Activated naive CD4-positive, alpha-beta T cell treated with anti-CD3 and anti-CD28 coated beads for 36 hours (primary cell): ENCODE measurements at regions of chr4 and their contacts with region 1.

Region 1: DNA sequence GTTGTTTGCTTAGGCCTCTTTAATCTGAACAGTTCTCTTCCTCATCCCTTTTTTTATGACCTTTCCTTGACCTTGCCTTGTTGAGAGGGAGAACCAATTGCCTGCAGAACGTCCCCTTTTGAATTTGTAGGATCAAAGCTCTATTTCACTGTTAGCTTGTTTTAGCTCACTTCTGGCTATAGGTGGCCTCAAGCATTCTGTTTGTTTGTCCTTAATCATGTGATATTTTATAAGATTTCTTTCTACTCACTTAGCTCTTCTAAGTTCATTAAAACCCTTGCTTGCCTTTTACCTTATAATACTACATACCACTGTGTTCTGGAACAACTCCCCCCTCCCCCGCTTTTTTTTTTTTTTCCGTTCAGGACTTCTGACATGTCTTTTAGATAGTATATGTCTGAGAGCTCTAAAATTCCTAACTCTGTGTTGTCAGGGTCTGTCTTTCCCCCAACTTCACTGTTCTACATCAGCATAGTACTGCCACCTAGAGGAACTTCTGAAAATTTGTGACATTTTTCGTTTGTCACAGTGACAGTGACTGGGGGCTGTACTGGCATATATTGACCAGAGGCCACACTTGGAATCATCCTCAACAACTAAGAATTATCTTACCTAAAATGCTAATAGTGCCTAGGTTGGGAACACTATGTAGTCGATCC is 128.5 kb downstream of the LARP7 start:
- DNase-seq: no peak
- H3K4me3 Mint-ChIP-seq: no peak overlapping the region
- H3K27ac Mint-ChIP-seq: no peak overlapping the region
- H3K4me1 Mint-ChIP-seq: no peaks in the 10 kb centered on the region
- H3K27me3 Mint-ChIP-seq: peaks cover 3% of the 10 kb centered on the region

Region 2: GRCh38 chr4:112099701-112100297 is 665.6 kb before region 1 on chr4:
- CTCF ChIA-PET with region 1: interaction called, 6 read pairs
- intact Hi-C with region 1: loop called (anchors 1 kb)
- DNase-seq: no peak
- H3K4me3 Mint-ChIP-seq: no peak overlapping the region
- H3K27ac Mint-ChIP-seq: no peak overlapping the region
- H3K4me1 Mint-ChIP-seq: peaks cover 5% of the 10 kb centered on the region
- H3K27me3 Mint-ChIP-seq: peaks cover 3% of the 10 kb centered on the region

Region 3: GRCh38 chr4:112523764-112524505 is 241.5 kb before region 1 on chr4:
- CTCF ChIA-PET with region 1: interaction called, 4 read pairs
- intact Hi-C with region 1: loop called (anchors 5 kb)
- DNase-seq: peak; percentile 90
- H3K4me3 Mint-ChIP-seq: peak overlapping the region; percentile 75
- H3K27ac Mint-ChIP-seq: no peak overlapping the region
- H3K4me1 Mint-ChIP-seq: peaks cover 31% of the 10 kb centered on the region
- H3K27me3 Mint-ChIP-seq: peaks cover 45% of the 10 kb centered on the region

Region 4: GRCh38 chr4:112648263-112649054 is 117.0 kb before region 1 on chr4:
- CTCF ChIA-PET with region 1: interaction called, 31 read pairs
- intact Hi-C with region 1: no loop called
- DNase-seq: no peak
- H3K4me3 Mint-ChIP-seq: no peak overlapping the region
- H3K27ac Mint-ChIP-seq: no peak overlapping the region
- H3K4me1 Mint-ChIP-seq: peaks cover 2% of the 10 kb centered on the region
- H3K27me3 Mint-ChIP-seq: no peaks in the 10 kb centered on the region

Region 5: DNA sequence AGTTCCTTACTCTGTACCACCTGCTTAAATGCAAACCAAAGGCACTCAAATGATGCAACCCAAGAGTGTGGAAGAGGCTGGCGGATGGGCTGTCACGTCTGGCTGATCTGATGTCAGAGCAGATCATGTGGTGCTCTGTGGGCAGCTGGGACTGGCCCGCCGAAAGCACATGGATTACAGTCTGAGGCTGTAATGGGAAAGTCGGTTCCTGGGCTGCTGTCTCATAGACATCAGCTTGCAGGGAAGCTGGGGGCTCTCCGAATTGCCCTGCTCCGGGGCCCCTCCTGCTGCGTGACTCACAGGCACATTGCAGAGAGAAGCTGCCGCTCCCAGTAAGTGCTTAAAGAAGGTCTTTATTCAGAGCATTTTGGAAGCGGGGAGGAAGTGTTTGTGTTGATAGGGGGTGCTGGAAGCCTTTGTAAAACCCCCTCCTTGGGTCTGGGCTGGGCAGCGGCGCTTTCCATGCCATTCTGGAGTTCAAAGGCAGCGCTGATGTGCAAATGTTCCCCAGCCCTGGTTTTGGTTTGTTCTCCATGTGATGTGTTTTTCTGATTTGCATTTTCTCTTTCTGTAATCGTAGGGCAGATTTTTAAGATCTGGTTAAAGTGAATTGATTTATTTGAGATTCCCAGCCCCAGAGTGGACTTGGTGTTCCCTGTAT is 52.6 kb after region 1 on chr4:
- CTCF ChIA-PET with region 1: interaction called, 7 read pairs
- intact Hi-C with region 1: loop called (anchors 2 kb)
- DNase-seq: peak; percentile 88
- H3K4me3 Mint-ChIP-seq: peak overlapping the region; percentile 79
- H3K27ac Mint-ChIP-seq: peak overlapping the region; percentile 62
- H3K4me1 Mint-ChIP-seq: peaks cover 15% of the 10 kb centered on the region
- H3K27me3 Mint-ChIP-seq: peaks cover 36% of the 10 kb centered on the region